ENCODE measurements at regions of chr1 and their contacts with region 1.

Region 1: GRCh38 chr1:154198756-154199562 is 7.1 kb upstream of the TPM3 start:
- DNase-seq: peak; percentile 53
- CTCF ChIP-seq: peak; percentile 64

Region 2: GRCh38 chr1:154183045-154183915 is 15.7 kb before region 1 on chr1:
- CTCF ChIA-PET with region 1: interaction called, 12 read pairs
- POLR2A ChIA-PET with region 1: interaction called, 3 read pairs
- DNase-seq: peak; percentile 95
- CTCF ChIP-seq: no peak

Region 3: GRCh38 chr1:154222518-154222917 is 23.6 kb after region 1 on chr1:
- CTCF ChIA-PET with region 1: interaction called, 11 read pairs
- POLR2A ChIA-PET with region 1: interaction called, 3 read pairs
- DNase-seq: no peak
- CTCF ChIP-seq: no peak

Region 4: GRCh38 chr1:154272217-154272998 is 73.4 kb after region 1 on chr1 and contains the start of gene HAX1:
- CTCF ChIA-PET with region 1: interaction called, 24 read pairs
- POLR2A ChIA-PET with region 1: interaction called, 15 read pairs
- DNase-seq: peak; percentile 95
- CTCF ChIP-seq: peak; percentile 74